ENCODE measurements at regions of chr3 and their contacts with region 1.

Region 1: GRCh38 chr3:8970971-8971589 is 7.8 kb upstream of the RAD18 start:
- DNase-seq: peak in 1 of 2 donors; percentile 61
- ATAC-seq: peak; percentile 45 to 82 (median 64)
- H3K4me3 ChIP-seq: no peak overlapping the region
- H3K27ac ChIP-seq: no peak overlapping the region
- H3K4me1 ChIP-seq: peaks cover 0 to 6% (median 0%) of the 10 kb centered on the region in 9 donors
- H3K27me3 ChIP-seq: peaks cover 0 to 12% (median 0%) of the 10 kb centered on the region in 7 donors
- CTCF ChIP-seq: peak; percentile 95 to 100 (median 99)

Region 2: DNA sequence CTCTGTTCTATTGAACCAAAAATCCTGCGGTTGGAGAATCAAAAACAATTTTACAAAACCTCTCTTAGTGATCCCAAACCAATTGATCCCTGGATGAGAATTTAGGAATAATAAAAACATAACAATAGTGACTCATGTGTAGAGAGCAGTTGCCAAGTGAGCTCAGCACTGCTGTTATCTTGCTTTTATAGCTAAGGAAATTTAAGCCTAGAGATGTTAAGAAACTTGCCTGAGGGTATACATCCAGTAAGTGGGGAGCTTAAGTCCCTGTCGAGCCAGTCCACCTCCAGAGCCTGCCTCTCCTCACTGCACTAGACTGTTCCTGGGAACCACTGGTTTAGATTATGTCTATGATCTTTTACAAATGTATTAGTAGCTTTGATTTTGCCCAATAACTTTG is 827.9 kb before region 1 on chr3:
- intact Hi-C with region 1: no loop called
- DNase-seq: no peak
- ATAC-seq: no peak
- H3K4me3 ChIP-seq: no peak overlapping the region
- H3K27ac ChIP-seq: no peak overlapping the region
- H3K4me1 ChIP-seq: no peaks in the 10 kb centered on the region
- H3K27me3 ChIP-seq: no peaks in the 10 kb centered on the region
- CTCF ChIP-seq: no peak

Region 3: GRCh38 chr3:9067352-9067975 is 96.4 kb after region 1 on chr3:
- intact Hi-C with region 1: loop called in 8 of 10 experiments (anchors 1 to 5 kb)
- DNase-seq: peak in 1 of 2 donors; percentile 58
- ATAC-seq: peak; percentile 56 to 85 (median 73)
- H3K4me3 ChIP-seq: no peak overlapping the region
- H3K27ac ChIP-seq: peak overlapping the region in 6 of 10 donors; percentile 1 to 71 (median 22)
- H3K4me1 ChIP-seq: peaks cover 0 to 40% (median 20%) of the 10 kb centered on the region in 9 donors
- H3K27me3 ChIP-seq: no peaks in the 10 kb centered on the region
- CTCF ChIP-seq: peak; percentile 88 to 97 (median 92)